B cell (primary cell): ENCODE measurements at regions of chr3 and their contacts with region 1.

Region 1: GRCh38 chr3:134212906-134213665 is 37.6 kb downstream of the RYK start:
- DNase-seq: peak; percentile 81
- ATAC-seq: peak; percentile 86
- H3K4me3 ChIP-seq: no peak overlapping the region
- H3K4me3 Mint-ChIP-seq: no peak overlapping the region
- H3K27ac ChIP-seq: no peak overlapping the region
- H3K27ac Mint-ChIP-seq: no peak overlapping the region
- H3K4me1 ChIP-seq: no peaks in the 10 kb centered on the region
- H3K4me1 Mint-ChIP-seq: peaks cover 15% of the 10 kb centered on the region
- H3K27me3 ChIP-seq: no peaks in the 10 kb centered on the region
- H3K27me3 Mint-ChIP-seq: no peaks in the 10 kb centered on the region
- CTCF ChIP-seq: peak; percentile 99

Region 2: DNA sequence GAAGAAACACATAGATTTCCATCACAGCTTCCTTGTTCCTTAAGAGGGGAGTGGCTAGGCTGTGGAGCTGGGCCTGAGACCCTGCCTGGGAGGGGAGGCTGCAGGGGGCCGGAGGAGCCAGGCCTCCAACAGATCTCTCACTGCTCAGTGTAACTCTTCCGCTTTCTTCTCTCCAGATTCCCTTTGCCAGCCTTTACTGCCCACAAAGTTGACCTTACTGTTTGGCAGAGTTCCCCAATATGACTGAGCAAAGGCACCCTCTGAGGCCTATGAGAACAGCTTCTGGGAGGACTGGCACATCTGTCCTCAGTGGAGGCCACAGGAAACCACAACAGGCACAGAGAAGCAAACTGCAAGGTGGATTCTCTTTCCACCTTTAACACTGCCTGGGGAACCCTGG is 221.4 kb before region 1 on chr3:
- CTCF ChIA-PET with region 1: no interaction called
- POLR2A ChIA-PET with region 1: no interaction called
- intact Hi-C with region 1: no loop called
- DNase-seq: no peak
- ATAC-seq: no peak
- H3K4me3 ChIP-seq: no peak overlapping the region
- H3K4me3 Mint-ChIP-seq: no peak overlapping the region
- H3K27ac ChIP-seq: no peak overlapping the region
- H3K27ac Mint-ChIP-seq: no peak overlapping the region
- H3K4me1 ChIP-seq: no peaks in the 10 kb centered on the region
- H3K4me1 Mint-ChIP-seq: no peaks in the 10 kb centered on the region
- H3K27me3 ChIP-seq: peaks cover 0 to 5% (median 2%) of the 10 kb centered on the region in 4 experiments
- H3K27me3 Mint-ChIP-seq: peaks cover 16% of the 10 kb centered on the region
- CTCF ChIP-seq: no peak

Region 3: DNA sequence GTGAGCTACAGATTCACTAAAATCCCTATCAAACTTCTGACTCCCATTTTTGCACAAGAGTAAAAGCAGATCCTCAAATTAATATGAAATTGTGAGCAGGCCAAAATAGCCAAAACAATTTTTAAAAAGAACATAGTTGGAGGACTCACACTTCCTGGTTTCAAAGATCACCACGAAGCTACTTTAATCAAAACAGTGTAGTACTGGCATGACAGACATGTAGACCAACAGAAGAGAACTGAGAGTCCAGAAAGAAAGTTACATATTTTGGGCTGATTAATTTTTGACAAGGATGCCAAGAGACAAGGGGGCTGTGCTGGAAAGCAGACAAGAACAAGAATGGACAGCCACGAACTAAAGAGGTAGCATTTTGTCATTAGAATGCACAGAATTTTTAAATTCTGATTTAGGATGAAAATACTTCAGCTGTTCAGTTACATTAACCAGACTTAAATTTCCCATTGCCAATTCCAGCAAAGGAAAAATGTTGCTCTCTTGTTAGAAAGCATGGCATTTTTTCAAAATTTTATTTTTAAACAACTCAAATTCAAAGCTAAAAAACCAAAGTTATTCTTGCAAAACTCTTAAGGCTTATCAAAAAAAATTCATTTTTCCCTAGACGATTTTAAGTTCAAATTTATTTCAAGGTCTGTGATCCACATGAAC is 23.6 kb after region 1 on chr3:
- CTCF ChIA-PET with region 1: interaction called, 50 read pairs
- POLR2A ChIA-PET with region 1: no interaction called
- intact Hi-C with region 1: no loop called
- DNase-seq: no peak
- ATAC-seq: no peak
- H3K4me3 ChIP-seq: no peak overlapping the region
- H3K4me3 Mint-ChIP-seq: peak overlapping the region; percentile 27
- H3K27ac ChIP-seq: peak overlapping the region in 1 of 2 donors; percentile 15
- H3K27ac Mint-ChIP-seq: peak overlapping the region; percentile 46
- H3K4me1 ChIP-seq: peaks cover 27 to 51% of the 10 kb centered on the region in 2 donors
- H3K4me1 Mint-ChIP-seq: peaks cover 73% of the 10 kb centered on the region
- H3K27me3 ChIP-seq: no peaks in the 10 kb centered on the region
- H3K27me3 Mint-ChIP-seq: no peaks in the 10 kb centered on the region
- CTCF ChIP-seq: no peak

Region 4: DNA sequence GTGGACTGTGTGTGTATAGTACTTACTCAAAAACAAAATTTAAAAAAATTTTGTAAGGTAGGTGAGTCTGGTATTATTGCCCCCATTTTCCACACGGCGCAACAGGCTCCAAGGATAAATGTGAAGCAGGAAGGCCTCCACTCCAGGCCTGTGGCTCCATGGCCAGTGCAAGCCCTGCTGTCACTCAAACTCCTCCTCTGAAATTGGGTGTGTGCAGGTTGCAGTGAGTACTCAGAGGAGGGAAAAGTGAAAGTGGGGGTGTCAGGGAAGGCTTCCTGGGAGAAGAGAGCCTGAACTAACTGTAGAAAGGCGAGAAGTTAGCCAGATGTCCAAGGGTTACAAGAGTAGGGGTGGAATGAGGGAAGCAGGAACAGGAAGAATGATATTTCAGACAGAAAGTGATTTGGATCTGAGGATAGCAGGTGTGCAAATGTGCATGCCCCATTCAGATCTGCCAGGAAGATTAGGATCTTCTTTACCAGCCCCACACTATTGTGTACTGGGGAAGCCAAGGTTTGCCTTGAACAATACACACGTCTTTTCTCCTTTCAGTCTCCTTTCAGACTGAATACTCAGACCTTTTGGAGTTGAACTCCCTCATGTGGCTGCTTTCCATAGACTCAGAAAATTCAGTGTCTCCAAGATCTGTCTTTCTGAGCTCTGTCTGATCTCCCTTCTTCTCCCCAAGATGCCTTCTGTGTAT is 86.2 kb after region 1 on chr3:
- CTCF ChIA-PET with region 1: interaction called, 18 read pairs
- POLR2A ChIA-PET with region 1: no interaction called
- intact Hi-C with region 1: loop called (anchors 1 kb)
- DNase-seq: no peak
- ATAC-seq: no peak
- H3K4me3 ChIP-seq: no peak overlapping the region
- H3K4me3 Mint-ChIP-seq: no peak overlapping the region
- H3K27ac ChIP-seq: no peak overlapping the region
- H3K27ac Mint-ChIP-seq: no peak overlapping the region
- H3K4me1 ChIP-seq: peaks cover 4 to 5% of the 10 kb centered on the region in 2 donors
- H3K4me1 Mint-ChIP-seq: no peaks in the 10 kb centered on the region
- H3K27me3 ChIP-seq: peaks cover 0 to 4% (median 2%) of the 10 kb centered on the region in 4 experiments
- H3K27me3 Mint-ChIP-seq: peaks cover 20% of the 10 kb centered on the region
- CTCF ChIP-seq: no peak

Region 5: GRCh38 chr3:134378384-134378783 is 165.3 kb after region 1 on chr3:
- CTCF ChIA-PET with region 1: interaction called, 7 read pairs
- POLR2A ChIA-PET with region 1: no interaction called
- intact Hi-C with region 1: loop called (anchors 5 kb)
- DNase-seq: no peak
- ATAC-seq: no peak
- H3K4me3 ChIP-seq: no peak overlapping the region
- H3K4me3 Mint-ChIP-seq: no peak overlapping the region
- H3K27ac ChIP-seq: no peak overlapping the region
- H3K27ac Mint-ChIP-seq: no peak overlapping the region
- H3K4me1 ChIP-seq: peaks cover 3% of the 10 kb centered on the region in 2 donors
- H3K4me1 Mint-ChIP-seq: peaks cover 20% of the 10 kb centered on the region
- H3K27me3 ChIP-seq: peaks cover 0 to 38% (median 5%) of the 10 kb centered on the region in 4 experiments
- H3K27me3 Mint-ChIP-seq: peaks cover 36% of the 10 kb centered on the region
- CTCF ChIP-seq: no peak

Region 6: DNA sequence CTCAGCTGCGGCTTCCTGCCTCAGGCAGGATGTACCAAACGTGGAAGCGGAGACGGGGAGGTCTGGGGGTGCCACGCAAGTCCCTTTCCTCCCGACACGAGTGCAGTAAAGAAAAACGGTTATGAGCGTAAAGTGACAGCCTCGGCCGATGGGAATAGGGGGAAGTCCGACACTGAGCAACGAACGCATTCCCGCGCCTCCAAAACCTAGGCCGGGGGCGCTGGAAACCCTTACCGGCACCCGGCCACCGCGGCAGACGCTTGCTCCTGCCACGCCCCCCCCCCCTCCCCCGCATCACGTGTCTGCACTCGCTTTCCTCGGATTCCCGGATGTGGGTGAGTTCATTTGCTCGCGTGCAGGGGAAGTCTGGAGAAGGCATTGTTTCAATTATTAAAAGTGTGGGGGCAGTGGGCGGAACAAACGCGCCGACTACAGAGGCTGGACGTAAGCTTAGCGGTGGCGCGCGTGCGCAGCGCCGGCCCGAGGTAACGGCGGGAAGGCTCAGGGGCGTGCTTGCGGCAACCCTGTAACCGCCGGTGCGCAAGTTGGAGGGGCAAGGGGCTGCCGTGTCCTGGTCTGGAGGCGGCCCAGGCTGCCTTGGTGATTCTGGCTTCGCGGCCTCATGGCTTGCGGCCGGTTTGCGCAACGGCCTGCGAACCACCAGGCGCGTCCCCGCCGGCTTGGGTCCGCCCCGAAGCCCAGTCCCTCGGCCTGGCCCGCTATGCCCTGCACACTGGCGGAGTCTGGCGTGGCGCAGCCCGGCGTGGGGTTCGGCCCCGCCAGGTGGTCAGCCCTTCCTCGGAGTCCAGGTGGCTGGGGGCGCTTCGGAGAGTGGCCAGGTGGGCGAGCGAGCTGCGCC is 272.9 kb after region 1 on chr3 and contains the starts of genes ANAPC13 and CEP63:
- CTCF ChIA-PET with region 1: interaction called, 35 read pairs
- POLR2A ChIA-PET with region 1: no interaction called
- intact Hi-C with region 1: loop called (anchors 5 kb)
- DNase-seq: peak; percentile 98
- ATAC-seq: peak; percentile 81
- H3K4me3 ChIP-seq: peak within 1 kb of the TSS; percentile 74 to 98 (median 95)
- H3K4me3 Mint-ChIP-seq: peak within 1 kb of the TSS; percentile 100
- H3K27ac ChIP-seq: peak within 1 kb of the TSS; percentile 78 to 89
- H3K27ac Mint-ChIP-seq: peak within 1 kb of the TSS; percentile 100
- H3K4me1 ChIP-seq: peaks cover 23 to 40% of the 10 kb centered on the region in 2 donors
- H3K4me1 Mint-ChIP-seq: peaks cover 45% of the 10 kb centered on the region
- H3K27me3 ChIP-seq: no peaks in the 10 kb centered on the region
- H3K27me3 Mint-ChIP-seq: no peaks in the 10 kb centered on the region
- CTCF ChIP-seq: no peak
- total RNA-seq, gene ANAPC13: 26.7 and 29.3 TPM in 2 replicates
- total RNA-seq, gene CEP63: 35.5 and 35.6 TPM in 2 replicates